HEK293T (cell line): ENCODE measurements at regions of chr9 and their contacts with region 1.

Region 1: GRCh38 chr9:121267689-121268597 is at the start of gene GSN:
- DNase-seq: peak; percentile 77

Region 2: GRCh38 chr9:121278535-121279261 is 10.8 kb after region 1 on chr9:
- CTCF ChIA-PET with region 1: interaction called, 28 read pairs
- POLR2A ChIA-PET with region 1: interaction called, 6 read pairs
- DNase-seq: peak; percentile 71

Region 3: GRCh38 chr9:121286973-121287741 is 19.2 kb after region 1 on chr9:
- CTCF ChIA-PET with region 1: interaction called, 3 read pairs
- POLR2A ChIA-PET with region 1: interaction called, 14 read pairs
- DNase-seq: peak; percentile 73